Posterior cingulate gyrus (tissue), 11 donors: ENCODE measurements at regions of chr16 and their contacts with region 1.

Region 1: GRCh38 chr16:471353-472198 is 46.1 kb downstream of the RAB11FIP3 start:
- DNase-seq: peak; percentile 83 to 99 (median 90)

Region 2: DNA sequence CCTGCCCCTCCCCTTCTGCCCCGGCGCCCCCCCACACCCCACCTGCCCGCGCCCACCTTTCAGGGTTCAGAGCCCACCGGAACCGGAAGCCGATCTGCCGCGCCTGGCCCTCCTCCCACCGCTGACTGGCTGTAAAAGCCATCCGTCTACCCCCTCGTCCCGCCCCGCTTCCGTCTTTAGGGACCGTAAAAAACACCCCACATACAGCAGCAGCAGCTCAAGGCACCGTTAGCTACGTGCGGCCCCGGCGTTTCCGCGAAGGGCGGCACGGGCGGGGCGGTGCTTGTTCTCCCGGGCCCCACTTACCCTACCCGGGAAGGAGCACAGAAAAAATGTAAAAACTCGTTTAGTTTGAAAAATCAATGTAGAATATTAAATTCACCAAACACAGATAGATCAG is 101.1 kb before region 1 on chr16 and contains the start of gene MRPL28:
- intact Hi-C with region 1: no loop called
- DNase-seq: peak; percentile 88 to 99 (median 94)

Region 3: GRCh38 chr16:425082-425718 is 46.4 kb before region 1 on chr16 and contains the start of gene RAB11FIP3:
- intact Hi-C with region 1: loop called (anchors 5 kb)
- DNase-seq: peak; percentile 73 to 98 (median 86)